ENCODE measurements at regions of chr3 and their contacts with region 1.

Region 1: GRCh38 chr3:149717391-149718056 is 34.8 kb downstream of the COMMD2 start:
- DNase-seq: peak; percentile 50 to 56
- H3K4me3 ChIP-seq: no peak overlapping the region
- H3K27ac ChIP-seq: no peak overlapping the region
- H3K4me1 ChIP-seq: no peaks in the 10 kb centered on the region
- H3K27me3 ChIP-seq: no peaks in the 10 kb centered on the region
- CTCF ChIP-seq: peak; percentile 65 to 95 (median 75)
- POLR2A ChIP-seq: no peak

Region 2: DNA sequence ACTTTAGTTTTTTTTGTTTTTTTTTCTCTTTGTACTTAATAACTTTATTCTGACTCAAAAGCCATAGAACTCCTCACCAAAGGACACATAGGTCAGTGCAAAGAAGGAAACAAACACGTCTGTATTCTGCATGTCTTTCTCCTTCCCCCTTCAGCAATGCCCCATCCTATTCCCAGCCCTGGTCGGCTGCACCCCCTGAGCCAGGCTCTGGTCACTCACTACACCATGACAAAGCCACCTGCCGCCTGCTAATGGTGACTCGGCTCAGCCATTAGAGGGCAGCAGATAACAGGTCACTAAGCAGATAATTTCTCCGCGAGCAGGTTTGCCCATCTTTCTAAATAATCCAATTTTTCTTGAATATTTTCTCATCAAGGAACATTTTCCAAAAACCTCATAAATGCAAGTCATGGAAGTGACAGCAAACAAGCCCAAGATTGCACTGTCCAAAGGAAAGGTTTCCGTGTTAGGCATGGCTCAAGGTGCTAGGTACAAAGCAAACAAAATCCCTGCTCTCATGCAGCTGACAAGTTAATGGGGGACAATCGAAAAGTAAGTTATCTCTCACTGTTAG is 205.2 kb before region 1 on chr3:
- intact Hi-C with region 1: loop called (anchors 5 kb)
- DNase-seq: peak; percentile 73 to 80
- H3K4me3 ChIP-seq: no peak overlapping the region
- H3K27ac ChIP-seq: peak overlapping the region in 2 of 3 donors; percentile 81 to 92
- H3K4me1 ChIP-seq: peaks cover 23 to 53% of the 10 kb centered on the region in 2 donors
- H3K27me3 ChIP-seq: no peaks in the 10 kb centered on the region
- CTCF ChIP-seq: peak; percentile 55 to 93 (median 85)
- POLR2A ChIP-seq: no peak

Region 3: DNA sequence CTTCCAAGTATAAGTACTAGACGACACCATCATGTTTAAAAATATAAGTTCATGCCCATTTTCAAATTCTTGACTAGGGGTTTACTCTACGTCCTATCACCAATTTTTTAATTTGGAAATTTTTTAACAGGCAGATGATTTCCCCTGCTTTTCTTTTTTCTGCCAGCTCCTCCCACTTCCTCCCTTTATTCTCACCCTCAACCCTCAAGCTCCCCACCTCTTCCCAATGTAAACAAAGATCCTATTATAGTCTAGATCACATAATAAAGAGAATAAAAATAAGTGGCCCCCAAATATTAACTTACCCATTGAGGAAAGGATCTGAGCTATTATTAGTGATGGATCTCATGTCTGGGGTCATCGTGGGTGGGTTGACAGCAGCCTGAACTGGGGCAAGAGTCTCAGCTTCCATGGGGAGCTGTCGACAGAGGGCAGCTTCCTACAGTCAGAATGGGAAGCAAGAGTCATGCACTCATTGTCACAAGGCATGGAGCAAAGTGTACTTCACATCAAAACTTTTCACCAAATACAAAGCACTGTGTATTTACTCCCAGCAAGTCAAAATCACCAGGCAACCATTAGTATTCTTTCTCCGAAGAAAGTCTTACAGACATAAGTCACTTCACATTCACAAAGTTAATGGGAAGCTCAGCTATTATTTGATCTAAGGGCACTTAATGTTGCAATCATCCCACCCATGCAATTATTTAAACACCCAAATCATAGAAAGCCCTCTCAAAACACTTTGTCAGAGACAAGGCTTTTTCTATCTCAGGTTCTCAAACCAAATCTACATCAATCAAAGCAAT is 189.8 kb before region 1 on chr3:
- intact Hi-C with region 1: loop called (anchors 5 kb)
- DNase-seq: peak; percentile 37 to 45
- H3K4me3 ChIP-seq: no peak overlapping the region
- H3K27ac ChIP-seq: peak overlapping the region; percentile 21 to 77 (median 75)
- H3K4me1 ChIP-seq: peaks cover 15 to 33% of the 10 kb centered on the region in 2 donors
- H3K27me3 ChIP-seq: no peaks in the 10 kb centered on the region
- CTCF ChIP-seq: peak in 4 of 6 experiments; percentile 27 to 57 (median 44)
- POLR2A ChIP-seq: no peak

Region 4: DNA sequence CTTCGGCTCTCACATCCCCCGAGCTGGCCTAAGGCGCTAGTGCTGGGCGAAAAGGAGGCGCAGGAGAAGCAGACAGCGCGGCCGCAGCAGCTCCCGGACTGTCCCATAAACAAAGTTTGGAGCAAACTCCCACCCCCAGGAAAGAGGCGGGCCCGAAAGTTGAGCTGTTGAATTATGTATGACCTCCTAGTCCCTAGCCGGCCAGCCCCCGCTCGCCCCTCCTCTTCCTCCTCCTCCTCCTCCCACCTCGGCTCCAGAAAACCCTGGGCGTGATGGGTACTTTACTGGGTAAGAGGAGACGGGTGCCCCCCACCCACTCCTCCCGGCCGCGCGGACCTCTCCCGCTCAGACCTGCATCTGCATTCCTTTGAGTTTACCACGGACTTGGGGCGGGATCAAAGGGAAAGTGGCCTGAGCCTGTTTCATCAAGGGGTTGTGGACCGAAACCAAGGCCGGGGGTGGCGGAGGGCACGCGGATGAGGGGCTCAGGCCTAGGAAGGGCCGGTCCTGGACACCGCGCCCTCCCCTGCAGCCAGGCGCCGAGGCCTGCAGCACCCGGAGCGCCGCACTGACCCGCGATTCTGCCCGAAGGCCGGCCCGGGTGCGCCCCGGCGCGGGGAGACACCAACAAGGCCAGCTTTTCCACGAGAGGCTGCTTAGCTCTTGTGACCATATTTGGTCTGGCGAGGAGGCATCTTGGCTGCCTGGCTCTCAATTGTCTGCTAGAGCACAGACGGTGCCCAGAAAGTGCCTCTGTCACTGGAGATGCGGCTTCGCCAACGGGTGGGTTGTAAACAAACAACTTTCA is 59.4 kb before region 1 on chr3 and contains the start of gene WWTR1:
- intact Hi-C with region 1: loop called (anchors 10 kb)
- DNase-seq: peak; percentile 96 to 97
- H3K4me3 ChIP-seq: peak within 1 kb of the TSS; percentile 66 to 70 (median 68)
- H3K27ac ChIP-seq: peak within 1 kb of the TSS; percentile 98 to 100 (median 99)
- H3K4me1 ChIP-seq: peaks cover 32 to 35% of the 10 kb centered on the region in 2 donors
- H3K27me3 ChIP-seq: no peaks in the 10 kb centered on the region
- CTCF ChIP-seq: peak in 3 of 6 experiments; percentile 15 to 32 (median 19)
- POLR2A ChIP-seq: peak; percentile 90 to 99
- total RNA-seq, gene WWTR1: 56.7 to 87.6 (median 78.5) TPM